Activated T-helper 2 cell treated with anti-CD3 and anti-CD28 coated beads, Interferon-gamma antibody, Interleukin-2, Interleukin-4, amounts not matched to agents 10 μg/mL and 5 μg/mL and 100 μg/mL, durations not matched to agents 14 hours and 24 hours and 36 hours (primary cell): ENCODE measurements at regions of chr7 and their contacts with region 1.

Region 1: DNA sequence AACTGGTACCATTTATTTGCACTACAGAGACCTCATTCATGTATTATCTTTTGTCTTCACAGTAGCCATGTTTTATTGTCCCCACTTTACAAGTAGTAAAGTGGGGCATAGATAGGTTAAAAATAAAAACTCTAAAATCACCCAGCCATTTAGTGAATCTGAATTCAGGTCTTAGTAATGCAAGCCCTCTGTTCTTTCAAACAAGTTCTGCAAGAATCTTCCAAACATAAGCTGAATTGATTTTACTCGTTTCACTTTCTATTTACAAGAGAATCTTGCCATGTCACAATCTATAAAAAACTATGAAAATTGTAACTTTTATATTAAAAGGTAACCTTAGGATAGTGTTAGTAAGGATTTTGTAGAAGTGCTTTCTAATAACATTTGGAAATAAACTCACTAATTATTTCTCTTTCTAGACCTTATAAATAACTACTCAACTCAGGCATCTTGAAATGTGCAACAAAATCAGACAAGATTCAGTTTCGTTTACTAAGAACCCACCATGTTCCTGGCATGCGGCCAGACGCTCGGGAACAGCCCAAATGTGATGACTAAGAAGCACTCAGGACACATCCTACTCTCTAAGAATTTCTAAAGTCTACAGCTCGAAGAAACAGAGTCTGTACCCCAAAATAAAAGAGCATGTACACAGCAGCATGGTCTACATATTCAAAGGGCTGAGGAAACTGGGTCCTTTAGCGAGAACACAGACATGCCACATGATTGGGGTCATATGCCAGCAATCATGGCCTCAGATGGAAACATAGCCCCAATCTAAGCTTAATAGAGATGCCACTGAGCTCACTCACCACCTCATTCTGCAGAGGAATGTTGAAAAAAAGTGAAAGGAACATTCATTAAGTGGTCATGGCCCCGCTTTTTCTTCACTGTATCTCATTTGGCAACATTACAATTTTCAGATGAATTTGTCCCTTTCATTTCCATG is 167.6 kb downstream of the AMPH start:
- DNase-seq: peak; percentile 68
- H3K4me3 Mint-ChIP-seq: peak overlapping the region; percentile 11
- H3K27ac Mint-ChIP-seq: peak overlapping the region; percentile 57
- H3K4me1 Mint-ChIP-seq: peaks cover 19% of the 10 kb centered on the region
- H3K27me3 Mint-ChIP-seq: no peaks in the 10 kb centered on the region

Region 2: GRCh38 chr7:38411404-38411803 is 52.1 kb before region 1 on chr7:
- intact Hi-C with region 1: loop called (anchors 5 kb)
- DNase-seq: no peak
- H3K4me3 Mint-ChIP-seq: no peak overlapping the region
- H3K27ac Mint-ChIP-seq: no peak overlapping the region
- H3K4me1 Mint-ChIP-seq: peaks cover 35% of the 10 kb centered on the region
- H3K27me3 Mint-ChIP-seq: peaks cover 3% of the 10 kb centered on the region